Sigmoid colon (tissue), 7 donors: ENCODE measurements at regions of chr19 and their contacts with region 1.

Region 1: GRCh38 chr19:45327404-45328143 is 4.9 kb upstream of the CKM start:
- DNase-seq: no peak
- H3K4me3 ChIP-seq: no peak overlapping the region
- H3K27ac ChIP-seq: no peak overlapping the region
- H3K4me1 ChIP-seq: peaks cover 0 to 30% (median 29%) of the 10 kb centered on the region in 4 donors
- H3K27me3 ChIP-seq: peaks cover 4 to 7% (median 5%) of the 10 kb centered on the region in 3 donors
- CTCF ChIP-seq: no peak
- EP300 ChIP-seq: no peak
- POLR2A ChIP-seq: no peak

Region 2: DNA sequence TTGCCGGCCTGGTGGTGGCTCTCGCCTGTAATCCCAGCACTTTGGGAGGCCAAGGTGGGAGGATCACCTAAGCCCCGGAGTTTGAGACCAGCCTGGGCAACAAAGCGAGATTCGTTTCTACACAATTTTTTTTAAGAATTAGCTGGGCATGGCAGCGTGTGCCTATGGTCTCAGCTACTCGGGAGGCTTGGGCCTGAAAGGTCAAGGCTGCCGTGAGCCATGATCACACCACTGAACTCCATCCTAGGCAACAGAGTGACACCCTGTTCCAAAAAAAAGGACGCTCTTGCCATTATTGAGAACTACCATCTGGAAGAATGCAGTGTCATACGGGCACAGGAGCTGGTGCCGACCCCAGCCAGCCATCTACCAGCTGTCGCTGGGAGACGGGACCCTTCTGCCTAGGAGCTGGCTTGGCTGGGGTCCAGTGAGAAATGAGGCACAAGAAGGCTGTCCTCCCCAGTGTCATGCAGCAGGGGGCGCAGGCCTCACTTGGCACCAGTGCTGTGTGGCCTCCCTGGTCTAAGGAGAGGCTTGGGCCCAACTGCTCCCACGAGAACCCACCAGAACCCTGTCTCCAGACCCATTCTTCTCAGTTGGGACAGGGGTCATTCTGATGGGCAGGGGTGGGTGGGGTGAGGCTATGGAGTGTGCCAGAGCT is 338.5 kb before region 1 on chr19:
- intact Hi-C with region 1: no loop called
- DNase-seq: peak; percentile 86
- H3K4me3 ChIP-seq: no peak overlapping the region
- H3K27ac ChIP-seq: no peak overlapping the region
- H3K4me1 ChIP-seq: peaks cover 0 to 2% (median 0%) of the 10 kb centered on the region in 4 donors
- H3K27me3 ChIP-seq: no peaks in the 10 kb centered on the region
- CTCF ChIP-seq: peak in 3 of 4 experiments; percentile 38 to 43 (median 41)
- EP300 ChIP-seq: no peak
- POLR2A ChIP-seq: no peak

Region 3: GRCh38 chr19:45187421-45188100 is 140.0 kb before region 1 on chr19:
- intact Hi-C with region 1: no loop called
- DNase-seq: no peak
- H3K4me3 ChIP-seq: no peak overlapping the region
- H3K27ac ChIP-seq: no peak overlapping the region
- H3K4me1 ChIP-seq: no peaks in the 10 kb centered on the region
- H3K27me3 ChIP-seq: no peaks in the 10 kb centered on the region
- CTCF ChIP-seq: peak in 2 of 4 experiments; percentile 19 to 41
- EP300 ChIP-seq: no peak
- POLR2A ChIP-seq: no peak

Region 4: DNA sequence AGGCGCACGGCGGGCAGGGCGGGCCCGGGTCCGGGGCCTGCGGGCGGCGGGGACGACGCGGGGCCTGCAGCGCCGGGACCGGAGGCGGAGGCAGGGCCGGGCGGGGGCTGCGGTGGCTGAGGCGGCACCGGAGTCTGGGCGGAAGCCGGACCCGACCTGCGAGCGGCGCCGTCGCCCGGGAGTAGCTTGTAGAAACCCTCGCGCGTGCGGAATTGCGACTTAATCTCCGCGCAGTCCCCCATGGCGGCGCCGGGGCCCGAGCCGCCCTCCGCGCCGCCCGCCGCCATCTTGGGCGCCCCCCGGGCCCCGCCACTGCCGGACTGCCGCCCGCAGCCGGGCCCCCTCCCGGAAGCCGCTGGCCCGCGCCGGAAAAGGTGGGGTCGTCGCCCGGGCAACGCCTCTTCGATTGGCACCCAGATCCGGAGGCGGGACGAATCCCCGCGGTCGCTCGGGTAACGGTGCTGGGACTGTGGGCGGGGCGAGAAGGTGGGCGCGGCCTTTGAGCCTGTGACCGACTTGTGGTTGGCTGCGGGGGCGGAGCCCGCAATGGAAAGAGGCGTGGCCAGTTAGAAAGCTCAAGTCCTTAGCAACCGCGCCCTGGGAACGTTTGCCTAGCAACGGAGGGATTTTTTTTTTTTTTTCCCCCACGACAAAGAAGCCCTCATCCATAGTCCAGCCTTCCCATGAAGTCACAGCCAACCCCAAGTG is 465.1 kb after region 1 on chr19 and contains the start of gene DMWD:
- intact Hi-C with region 1: loop called (anchors 5 kb)
- DNase-seq: peak; percentile 100
- H3K4me3 ChIP-seq: peak within 1 kb of the TSS; percentile 56 to 86 (median 74)
- H3K27ac ChIP-seq: peak within 1 kb of the TSS; percentile 72 to 92 (median 83)
- H3K4me1 ChIP-seq: peaks cover 0 to 23% (median 19%) of the 10 kb centered on the region in 4 donors
- H3K27me3 ChIP-seq: no peaks in the 10 kb centered on the region
- CTCF ChIP-seq: no peak
- EP300 ChIP-seq: no peak
- POLR2A ChIP-seq: no peak
- total RNA-seq, gene DMWD: 21.1 to 59.5 (median 36.8) TPM